ENCODE measurements at regions of chr5 and their contacts with region 1.

Region 1: DNA sequence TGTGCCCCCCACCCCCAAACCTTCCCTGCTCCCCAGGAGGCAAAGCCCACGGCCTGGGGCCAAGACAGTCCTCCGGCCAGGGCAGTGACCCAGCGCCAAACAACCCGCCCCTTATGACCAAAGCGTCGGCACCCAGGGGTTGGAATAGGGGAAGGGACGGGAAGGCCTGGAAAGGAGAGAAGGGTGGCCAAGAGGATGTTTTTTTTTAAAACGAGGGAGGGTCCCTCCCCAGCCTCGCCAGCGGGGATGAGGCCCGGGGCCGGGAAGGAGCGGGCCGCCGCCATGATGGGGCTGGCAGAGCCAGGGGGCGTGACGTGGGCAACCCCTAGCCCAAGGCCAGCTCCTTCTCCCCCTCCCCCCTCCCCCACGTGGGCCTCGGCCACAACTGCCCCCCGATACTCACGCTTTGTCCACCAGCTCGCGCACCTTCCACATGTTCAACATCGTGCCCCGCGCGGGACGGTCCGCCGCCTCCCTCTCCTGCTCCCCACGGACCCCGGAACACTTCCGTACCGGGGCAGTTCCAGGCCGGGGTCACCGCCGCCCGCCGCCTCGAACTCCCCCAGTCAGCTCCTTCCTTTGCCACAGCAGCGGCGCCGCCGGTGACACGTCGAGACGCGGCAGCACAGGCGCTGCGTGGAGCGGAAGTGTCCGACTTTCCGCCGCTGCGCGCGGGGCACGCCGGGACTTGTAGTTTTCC is at the start of gene CLINT1:
- DNase-seq: peak; percentile 41
- H3K4me3 ChIP-seq: peak within 1 kb of the TSS; percentile 92
- H3K27ac ChIP-seq: peak within 1 kb of the TSS; percentile 77
- H3K27me3 ChIP-seq: no peaks in the 10 kb centered on the region
- CTCF ChIP-seq: no peak
- polyA plus RNA-seq, gene CLINT1: 103 and 107 TPM in 2 replicates

Region 2: GRCh38 chr5:157718519-157718918 is 140.2 kb before region 1 on chr5:
- CTCF ChIA-PET with region 1: no interaction called
- POLR2A ChIA-PET with region 1: no interaction called
- DNase-seq: no peak
- H3K4me3 ChIP-seq: no peak overlapping the region
- H3K27ac ChIP-seq: no peak overlapping the region
- H3K27me3 ChIP-seq: no peaks in the 10 kb centered on the region
- CTCF ChIP-seq: peak; percentile 69

Region 3: GRCh38 chr5:157748760-157749461 is 109.8 kb before region 1 on chr5:
- CTCF ChIA-PET with region 1: no interaction called
- POLR2A ChIA-PET with region 1: no interaction called
- DNase-seq: peak; percentile 56
- H3K4me3 ChIP-seq: no peak overlapping the region
- H3K27ac ChIP-seq: peak overlapping the region; percentile 77
- H3K27me3 ChIP-seq: no peaks in the 10 kb centered on the region
- CTCF ChIP-seq: no peak

Region 4: DNA sequence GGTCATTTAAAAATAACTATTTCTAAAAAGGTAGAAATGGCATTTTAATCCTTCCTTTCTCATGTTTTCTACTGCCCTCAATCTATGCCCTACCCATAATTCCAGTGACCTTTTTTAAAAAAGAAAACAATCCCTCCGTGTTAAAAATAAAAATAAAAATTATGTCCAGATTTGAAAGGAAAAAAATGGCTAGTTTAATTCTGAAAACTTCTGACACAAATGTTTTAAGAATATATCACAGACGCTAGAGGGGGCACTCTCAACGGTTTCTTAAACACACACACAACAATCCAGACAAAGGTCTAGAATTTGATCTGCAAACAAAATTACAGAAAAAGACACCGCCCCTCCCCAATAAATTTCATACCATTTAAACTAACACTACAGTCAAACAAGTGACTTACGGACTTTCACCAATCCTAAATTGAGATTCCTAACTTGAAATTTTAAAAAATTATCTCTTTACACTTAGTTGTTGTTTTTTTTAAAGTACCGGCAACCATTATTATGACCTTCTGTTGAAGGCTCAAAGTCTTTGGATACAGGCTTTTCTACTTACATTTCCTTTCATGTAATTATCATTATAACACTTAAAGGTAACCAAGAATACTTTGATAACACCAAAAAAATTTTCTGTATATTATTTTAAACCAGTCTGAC is 38.0 kb before region 1 on chr5:
- CTCF ChIA-PET with region 1: interaction called, 14 read pairs
- POLR2A ChIA-PET with region 1: interaction called, 3 read pairs
- DNase-seq: peak; percentile 6
- H3K4me3 ChIP-seq: no peak overlapping the region
- H3K27ac ChIP-seq: no peak overlapping the region
- H3K27me3 ChIP-seq: no peaks in the 10 kb centered on the region
- CTCF ChIP-seq: peak; percentile 68

Region 5: DNA sequence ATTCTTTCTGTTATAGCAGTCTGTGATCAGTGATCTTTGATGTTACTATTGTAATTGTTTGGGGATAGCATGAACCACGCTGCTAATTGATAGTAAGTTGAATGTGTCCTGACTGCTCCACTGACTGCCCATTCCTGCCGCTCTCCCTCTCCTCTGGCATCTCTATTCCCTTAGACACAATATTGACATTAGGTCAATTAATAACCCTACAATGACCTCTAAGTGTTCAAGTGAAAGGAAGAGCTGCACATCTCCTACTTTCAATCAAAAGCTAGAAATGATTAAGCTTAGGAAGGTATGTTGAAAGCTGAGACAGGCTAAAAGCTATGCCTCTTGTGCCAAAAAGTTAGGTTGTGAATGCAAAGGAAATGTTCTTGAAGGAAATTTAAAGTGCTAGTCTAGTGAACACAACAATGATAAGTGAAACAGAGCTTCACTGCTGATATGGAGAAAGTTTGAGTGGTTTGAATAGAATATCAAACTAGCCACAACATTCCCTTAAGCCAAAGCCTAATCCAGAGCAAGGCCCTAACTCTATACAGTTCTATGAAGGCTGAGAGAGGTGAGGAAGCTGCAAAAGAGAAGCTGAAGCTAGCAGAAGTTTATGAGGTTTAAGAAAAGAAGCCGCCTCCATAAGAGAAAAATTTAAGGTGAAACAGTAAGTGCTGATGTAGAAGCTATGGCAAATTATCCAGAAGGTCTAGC is 12.6 kb before region 1 on chr5:
- CTCF ChIA-PET with region 1: interaction called, 14 read pairs
- POLR2A ChIA-PET with region 1: no interaction called
- DNase-seq: no peak
- H3K4me3 ChIP-seq: no peak overlapping the region
- H3K27ac ChIP-seq: no peak overlapping the region
- H3K27me3 ChIP-seq: no peaks in the 10 kb centered on the region
- CTCF ChIP-seq: no peak